H1 (cell line): ENCODE measurements at regions of chr5 and their contacts with region 1.

Region 1: DNA sequence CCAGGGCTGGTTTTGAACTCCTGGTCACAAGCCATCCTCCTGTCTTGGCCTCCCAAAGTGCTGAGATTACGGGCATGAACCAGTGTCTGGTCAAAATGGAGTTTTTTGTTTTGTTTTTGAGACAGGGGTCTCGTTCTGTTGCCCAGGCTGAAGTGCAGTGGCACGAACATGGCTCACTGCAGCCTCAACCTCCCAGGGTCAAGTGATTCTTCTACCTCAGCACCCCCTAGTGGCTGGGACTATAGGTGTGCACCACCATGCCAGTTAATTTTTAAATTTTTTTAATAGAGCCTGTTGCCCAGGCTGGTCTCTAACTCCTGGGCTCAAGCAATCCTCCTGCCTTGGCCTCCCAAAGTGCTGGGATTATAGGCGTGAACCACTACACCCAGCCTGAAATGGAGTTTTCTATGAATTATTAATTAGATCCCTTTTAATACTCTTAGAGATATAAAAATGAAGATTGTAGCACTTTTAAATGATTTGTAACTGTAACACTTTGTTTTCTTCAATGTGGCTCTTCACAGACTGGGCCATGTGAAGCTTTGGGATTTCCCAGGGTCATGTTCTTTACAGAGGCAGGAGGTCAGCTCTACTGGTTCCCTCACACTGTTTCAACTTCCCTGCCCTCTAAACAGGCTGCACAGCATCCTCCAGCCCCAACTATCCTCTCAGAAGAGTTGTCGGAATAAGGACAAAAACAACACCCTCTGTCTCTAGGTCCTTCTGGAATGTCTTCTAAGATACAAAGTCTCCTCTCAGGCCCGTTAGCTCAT is 32.7 kb upstream of the SPARC start:
- DNase-seq: peak in 1 of 2 experiments; percentile 67
- H3K4me3 ChIP-seq: no peak overlapping the region
- H3K27ac ChIP-seq: no peak overlapping the region
- H3K4me1 ChIP-seq: peaks cover 0 to 10% (median 6%) of the 10 kb centered on the region in 4 experiments; a peak in 4 of 7 replicates
- H3K27me3 ChIP-seq: no peaks in the 10 kb centered on the region
- CTCF ChIP-seq: peak; percentile 54 to 56 (median 55)
- EP300 ChIP-seq: no peak
- POLR2A ChIP-seq: no peak
- RAD21 ChIP-seq: peak; percentile 65 to 73

Region 2: DNA sequence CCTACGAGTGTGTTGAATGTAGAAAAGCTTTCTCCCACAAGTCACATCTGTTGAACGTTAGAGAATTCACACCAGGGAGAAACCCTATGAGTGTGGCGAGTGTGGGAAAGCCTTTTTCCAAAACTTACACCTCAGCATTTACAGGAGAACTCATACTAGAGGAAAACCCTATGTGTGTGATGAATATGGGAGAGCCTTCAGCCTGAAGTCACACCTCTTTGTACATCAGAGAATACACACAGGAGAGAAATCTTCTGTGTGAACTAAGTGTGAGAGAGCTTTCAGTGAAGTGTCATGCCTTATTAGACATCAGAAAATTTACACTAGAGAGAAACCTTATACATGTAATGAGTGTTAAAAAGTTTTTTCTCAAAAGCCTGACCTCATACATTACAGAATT is 740.8 kb before region 1 on chr5:
- CTCF ChIA-PET with region 1: no interaction called
- POLR2A ChIA-PET with region 1: no interaction called
- DNase-seq: no peak
- H3K4me3 ChIP-seq: no peak overlapping the region
- H3K27ac ChIP-seq: no peak overlapping the region
- H3K4me1 ChIP-seq: no peaks in the 10 kb centered on the region
- H3K27me3 ChIP-seq: peaks cover 0 to 1% (median 0%) of the 10 kb centered on the region in 4 experiments; a peak in 1 of 7 replicates
- CTCF ChIP-seq: no peak
- EP300 ChIP-seq: no peak
- POLR2A ChIP-seq: no peak
- RAD21 ChIP-seq: no peak

Region 3: DNA sequence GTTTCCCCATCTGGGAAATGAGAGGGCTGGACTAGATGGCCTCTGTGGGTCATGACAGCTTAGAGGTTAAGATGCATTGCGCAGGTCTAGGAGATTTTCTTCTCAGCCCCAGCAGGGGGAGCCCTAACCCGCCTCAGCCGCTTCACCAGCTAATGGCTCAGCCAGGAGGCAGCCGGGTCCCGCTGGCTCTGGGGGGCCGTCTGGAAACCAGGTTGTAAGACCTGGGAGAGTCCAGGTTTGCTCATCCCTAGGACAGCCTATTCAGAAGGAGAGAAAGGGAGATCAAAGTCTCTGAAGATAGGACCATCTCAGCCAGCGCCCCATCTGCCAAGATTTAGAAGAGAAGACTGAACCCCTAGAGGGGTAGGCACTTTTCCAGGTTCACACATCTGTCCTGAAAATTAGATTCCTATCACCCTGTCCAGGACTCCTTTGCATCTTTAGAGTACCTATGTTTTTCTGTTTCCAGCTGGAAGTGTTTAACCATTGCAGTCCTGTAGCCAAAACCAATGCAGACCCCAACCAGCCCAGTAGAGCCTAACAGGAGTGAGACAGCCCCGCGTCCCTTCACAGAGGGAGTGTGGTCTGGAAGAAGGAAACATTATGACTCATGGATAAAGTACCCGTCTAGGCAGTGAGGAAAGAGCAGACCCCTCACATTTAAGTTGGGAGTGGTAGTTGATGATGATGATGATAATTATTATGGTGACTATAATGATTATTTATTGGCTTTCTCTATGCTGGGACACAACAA is 60.2 kb before region 1 on chr5:
- CTCF ChIA-PET with region 1: interaction called, 59 read pairs
- POLR2A ChIA-PET with region 1: no interaction called
- DNase-seq: peak; percentile 77 to 96
- H3K4me3 ChIP-seq: no peak overlapping the region
- H3K27ac ChIP-seq: no peak overlapping the region
- H3K4me1 ChIP-seq: peaks cover 0 to 5% (median 0%) of the 10 kb centered on the region in 4 experiments; a peak in 1 of 7 replicates
- H3K27me3 ChIP-seq: no peaks in the 10 kb centered on the region
- CTCF ChIP-seq: peak; percentile 76 to 98 (median 87)
- EP300 ChIP-seq: no peak
- POLR2A ChIP-seq: no peak
- RAD21 ChIP-seq: peak; percentile 92 to 99

Region 4: DNA sequence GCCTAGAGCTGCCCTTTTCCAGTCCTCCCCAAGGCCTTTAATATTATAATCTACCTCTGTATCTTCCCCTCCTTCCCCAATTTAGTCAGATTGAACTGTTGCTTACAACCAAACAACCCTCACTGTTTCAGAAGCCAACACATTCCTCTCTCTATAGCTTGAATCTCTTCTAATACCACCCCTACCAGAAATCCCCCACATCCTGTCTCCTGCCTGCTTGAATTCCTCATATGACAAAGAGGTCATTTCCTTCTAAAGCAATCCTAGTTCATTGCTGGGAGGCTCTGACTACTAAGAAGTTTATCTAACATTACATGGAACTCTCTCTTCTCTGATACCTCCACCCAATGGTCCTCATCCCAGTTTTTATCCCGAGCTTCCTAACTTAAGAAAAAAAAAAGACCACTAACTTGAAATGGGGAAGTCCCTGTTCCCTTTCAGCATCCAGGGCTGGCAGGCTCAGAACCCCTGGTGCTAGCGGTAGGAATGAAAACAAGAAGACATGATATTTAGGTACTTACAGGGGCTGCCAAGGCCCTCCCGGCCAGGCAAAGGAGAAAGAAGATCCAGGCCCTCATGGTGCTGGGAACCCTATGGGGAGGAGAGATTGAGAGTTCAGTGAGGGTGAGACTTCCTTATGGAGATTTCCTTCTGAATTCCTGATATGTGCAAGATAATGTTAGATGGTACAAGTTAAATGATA is 43.7 kb before region 1 on chr5:
- CTCF ChIA-PET with region 1: interaction called, 22 read pairs
- POLR2A ChIA-PET with region 1: interaction called, 3 read pairs
- DNase-seq: no peak
- H3K4me3 ChIP-seq: no peak overlapping the region
- H3K27ac ChIP-seq: no peak overlapping the region
- H3K4me1 ChIP-seq: peaks cover 3 to 18% (median 10%) of the 10 kb centered on the region in 4 experiments; a peak in 5 of 7 replicates
- H3K27me3 ChIP-seq: no peaks in the 10 kb centered on the region
- CTCF ChIP-seq: no peak
- EP300 ChIP-seq: no peak
- POLR2A ChIP-seq: no peak
- RAD21 ChIP-seq: no peak

Region 5: DNA sequence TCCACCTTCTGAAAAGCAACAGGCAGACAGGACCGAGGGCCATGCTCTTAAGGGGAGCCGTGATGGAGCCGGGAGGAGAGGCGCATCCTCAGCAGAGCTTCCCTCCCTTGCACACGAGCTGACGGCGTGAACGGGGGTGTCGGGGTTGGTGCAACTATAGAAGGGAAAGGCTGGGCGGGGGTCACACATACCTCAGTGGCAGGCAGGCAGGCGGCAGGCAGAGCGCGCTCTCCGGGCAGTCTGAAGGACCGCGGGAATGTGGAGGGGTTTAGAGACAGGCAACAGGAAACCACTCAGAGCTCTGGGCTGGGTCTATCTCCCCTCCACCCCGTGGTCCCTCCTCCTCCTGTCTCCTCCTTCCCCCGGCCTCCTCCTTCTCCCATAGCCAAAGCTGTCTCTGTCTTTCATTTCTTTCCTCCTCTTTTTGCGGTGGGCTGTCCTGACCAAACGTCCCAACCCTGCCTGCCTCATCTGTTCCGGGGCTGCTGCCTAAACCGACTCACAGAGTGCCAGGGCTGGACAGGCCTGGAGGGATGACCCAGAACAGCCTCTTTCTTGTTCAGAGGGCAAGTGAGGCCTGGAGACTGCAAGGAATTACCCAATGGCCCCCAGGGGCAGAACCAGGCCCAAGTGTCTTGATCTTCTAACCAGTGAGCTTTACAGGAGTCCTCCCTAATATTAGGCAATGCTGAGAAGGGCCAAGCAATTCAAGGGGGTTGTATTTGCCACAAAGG is 32.6 kb before region 1 on chr5 and contains the start of gene SPARC:
- CTCF ChIA-PET with region 1: interaction called, 41 read pairs
- POLR2A ChIA-PET with region 1: interaction called, 6 read pairs
- DNase-seq: peak; percentile 56 to 77
- H3K4me3 ChIP-seq: peak within 1 kb of the TSS; percentile 64 to 79 (median 72)
- H3K27ac ChIP-seq: no peak within 1 kb of the TSS
- H3K4me1 ChIP-seq: peaks cover 3 to 23% (median 15%) of the 10 kb centered on the region in 4 experiments
- H3K27me3 ChIP-seq: no peaks in the 10 kb centered on the region
- CTCF ChIP-seq: no peak
- EP300 ChIP-seq: no peak
- POLR2A ChIP-seq: peak; percentile 27 to 94
- RAD21 ChIP-seq: no peak; a peak in 1 of 4 replicates
- total RNA-seq, gene SPARC: 438 and 452 TPM in 2 replicates

Region 6: DNA sequence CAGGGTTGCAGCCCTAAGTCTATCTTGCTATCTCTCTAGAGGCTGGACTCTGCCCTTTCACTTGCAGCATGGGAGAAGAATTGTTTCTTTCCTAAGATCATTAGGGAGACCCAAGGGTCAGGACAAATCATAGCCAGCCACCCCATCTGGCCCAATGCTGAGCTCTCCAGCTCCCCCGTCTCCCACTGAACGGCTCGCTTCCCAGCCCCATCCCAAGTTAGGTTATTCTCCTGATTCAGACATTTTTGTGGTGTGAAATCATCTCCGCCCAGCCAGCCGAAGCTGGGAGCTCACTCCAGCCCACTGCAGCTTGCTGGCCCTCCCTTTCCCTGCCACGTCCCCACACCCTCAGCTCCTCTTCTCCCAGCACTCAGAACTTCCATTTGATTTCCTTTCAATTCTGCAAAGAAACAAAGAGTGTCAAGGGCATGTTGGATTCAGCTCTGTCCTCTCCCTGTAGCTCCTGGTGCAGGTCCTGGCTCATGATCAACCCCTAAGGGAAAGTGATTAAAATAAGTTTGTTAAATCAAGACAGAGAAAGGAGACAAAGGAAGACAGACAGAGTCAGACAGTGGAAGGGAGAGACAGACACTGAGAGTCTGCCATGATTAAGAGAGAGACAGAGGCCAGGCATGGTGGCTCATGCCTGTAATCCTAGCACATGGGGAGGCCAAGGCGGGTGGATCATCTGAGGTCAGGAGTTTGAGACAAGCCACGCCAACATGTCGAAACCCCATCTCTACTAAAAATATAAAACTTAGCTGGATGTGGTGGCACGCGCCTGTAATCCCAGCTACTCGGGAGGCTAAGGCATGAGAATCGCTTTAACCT is 20.1 kb before region 1 on chr5:
- CTCF ChIA-PET with region 1: interaction called, 10 read pairs
- POLR2A ChIA-PET with region 1: interaction called, 3 read pairs
- DNase-seq: no peak
- H3K4me3 ChIP-seq: no peak overlapping the region
- H3K27ac ChIP-seq: no peak overlapping the region
- H3K4me1 ChIP-seq: peaks cover 3 to 14% (median 6%) of the 10 kb centered on the region in 4 experiments
- H3K27me3 ChIP-seq: no peaks in the 10 kb centered on the region
- CTCF ChIP-seq: no peak
- EP300 ChIP-seq: no peak
- POLR2A ChIP-seq: no peak
- RAD21 ChIP-seq: no peak

Region 7: GRCh38 chr5:151708126-151708525 is 11.3 kb before region 1 on chr5:
- CTCF ChIA-PET with region 1: interaction called, 53 read pairs
- POLR2A ChIA-PET with region 1: interaction called, 3 read pairs
- DNase-seq: no peak
- H3K4me3 ChIP-seq: no peak overlapping the region
- H3K27ac ChIP-seq: no peak overlapping the region
- H3K4me1 ChIP-seq: no peaks in the 10 kb centered on the region
- H3K27me3 ChIP-seq: peaks cover 0 to 1% (median 0%) of the 10 kb centered on the region in 4 experiments; a peak in 1 of 7 replicates
- CTCF ChIP-seq: no peak
- EP300 ChIP-seq: no peak
- POLR2A ChIP-seq: no peak
- RAD21 ChIP-seq: no peak

Region 8: GRCh38 chr5:151779636-151780035 is 60.2 kb after region 1 on chr5:
- CTCF ChIA-PET with region 1: no interaction called
- POLR2A ChIA-PET with region 1: no interaction called
- DNase-seq: no peak
- H3K4me3 ChIP-seq: no peak overlapping the region; a peak in 1 of 8 replicates
- H3K27ac ChIP-seq: no peak overlapping the region
- H3K4me1 ChIP-seq: peaks cover 0 to 19% (median 9%) of the 10 kb centered on the region in 4 experiments; a peak in 6 of 7 replicates
- H3K27me3 ChIP-seq: no peaks in the 10 kb centered on the region
- CTCF ChIP-seq: no peak
- EP300 ChIP-seq: no peak
- POLR2A ChIP-seq: no peak
- RAD21 ChIP-seq: no peak